Activated CD4-positive, alpha-beta T cell treated with anti-CD3 and anti-CD28 coated beads, Interleukin-2, amount 10 ng/mL, durations not matched to agents 24 days and 14 days (primary cell): ENCODE measurements at regions of chr2 and their contacts with region 1.

Region 1: DNA sequence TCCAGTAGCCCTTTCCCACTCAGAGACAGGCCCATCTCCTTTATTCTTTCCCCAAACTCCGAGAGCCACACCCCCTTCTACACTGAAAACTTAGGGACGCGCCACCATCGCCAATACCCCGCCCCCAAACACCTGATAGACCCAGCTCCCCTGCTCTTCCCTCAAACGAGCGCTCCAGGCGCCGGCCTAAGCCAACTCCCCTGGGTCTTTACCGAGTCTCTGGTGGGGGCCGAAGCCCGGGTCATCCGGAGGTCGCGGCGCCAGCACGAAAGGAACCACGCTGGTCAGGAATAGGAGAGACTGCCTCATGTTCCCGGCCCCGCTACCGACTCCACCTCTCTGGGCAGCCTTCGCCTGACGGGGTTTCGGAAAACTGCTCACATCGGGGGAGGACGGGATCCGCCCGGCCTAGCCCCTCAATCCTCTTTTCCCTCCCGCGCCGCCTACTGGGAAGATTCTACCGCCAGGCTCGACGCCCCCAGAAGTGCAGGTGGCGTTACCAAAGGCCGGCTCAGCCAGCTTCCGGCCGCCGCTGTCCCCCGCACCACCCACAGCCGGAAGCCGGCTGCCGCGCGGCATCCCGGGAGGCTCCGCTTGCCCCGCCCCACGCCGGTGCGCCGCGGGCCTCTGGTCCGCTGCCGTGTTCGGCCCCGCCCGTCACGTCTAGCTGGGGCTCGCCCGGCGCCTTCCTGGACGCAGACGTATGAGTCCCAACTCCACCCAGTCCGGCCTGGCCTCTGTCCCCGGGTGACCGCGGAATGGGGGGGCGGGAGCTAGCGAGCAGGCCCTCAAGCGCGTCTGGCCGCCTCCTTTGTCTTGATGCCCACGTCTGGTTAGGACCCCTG is at the start of gene ADAM17:
- DNase-seq: peak; percentile 97
- H3K4me3 Mint-ChIP-seq: peak within 1 kb of the TSS; percentile 96
- H3K27ac Mint-ChIP-seq: peak within 1 kb of the TSS; percentile 93
- H3K4me1 Mint-ChIP-seq: peaks cover 48% of the 10 kb centered on the region
- H3K27me3 Mint-ChIP-seq: no peaks in the 10 kb centered on the region
- total RNA-seq, gene ADAM17: 25.6 and 26.5 TPM in 2 replicates

Region 2: DNA sequence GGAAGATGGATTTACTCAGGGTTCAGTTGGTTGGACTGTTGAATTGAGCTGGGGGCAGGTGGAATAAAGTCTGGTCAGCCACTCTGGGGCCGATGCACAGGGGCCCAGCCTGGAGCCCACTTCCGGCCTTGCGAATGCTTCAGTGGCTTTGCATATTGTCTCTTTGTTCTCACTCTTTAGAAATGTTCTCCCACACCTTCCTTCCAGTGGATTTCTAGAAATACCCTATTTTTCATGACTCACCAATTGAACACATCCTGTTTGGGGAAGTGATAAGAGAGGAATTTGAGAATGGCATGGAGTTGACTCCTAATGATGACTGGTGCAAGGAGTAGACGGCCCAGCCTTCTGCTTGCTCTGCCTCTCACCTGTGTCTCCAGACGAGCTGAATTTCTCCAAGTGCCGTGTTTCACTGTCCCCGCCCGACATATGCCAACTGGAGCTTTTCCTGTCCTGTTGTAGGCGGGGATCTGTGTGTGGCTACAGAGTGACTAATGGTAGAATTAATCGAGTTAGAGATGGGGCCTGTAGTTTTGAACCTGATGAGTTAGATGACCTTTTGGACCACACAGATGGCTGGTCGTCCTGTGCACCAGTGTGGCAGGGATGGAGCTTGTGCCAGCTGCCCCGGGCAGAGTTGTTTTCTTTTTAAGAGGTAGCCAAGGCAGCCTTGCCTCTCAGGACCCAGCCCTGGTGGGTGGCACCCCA is 320.7 kb before region 1 on chr2:
- intact Hi-C with region 1: no loop called
- DNase-seq: no peak
- H3K4me3 Mint-ChIP-seq: no peak overlapping the region
- H3K27ac Mint-ChIP-seq: no peak overlapping the region
- H3K4me1 Mint-ChIP-seq: peaks cover 7% of the 10 kb centered on the region
- H3K27me3 Mint-ChIP-seq: peaks cover 5% of the 10 kb centered on the region

Region 3: GRCh38 chr2:9494096-9494495 is 61.4 kb before region 1 on chr2:
- intact Hi-C with region 1: loop called (anchors 5 kb)
- DNase-seq: no peak
- H3K4me3 Mint-ChIP-seq: no peak overlapping the region
- H3K27ac Mint-ChIP-seq: peak overlapping the region; percentile 18
- H3K4me1 Mint-ChIP-seq: peaks cover 21% of the 10 kb centered on the region
- H3K27me3 Mint-ChIP-seq: no peaks in the 10 kb centered on the region

Region 4: DNA sequence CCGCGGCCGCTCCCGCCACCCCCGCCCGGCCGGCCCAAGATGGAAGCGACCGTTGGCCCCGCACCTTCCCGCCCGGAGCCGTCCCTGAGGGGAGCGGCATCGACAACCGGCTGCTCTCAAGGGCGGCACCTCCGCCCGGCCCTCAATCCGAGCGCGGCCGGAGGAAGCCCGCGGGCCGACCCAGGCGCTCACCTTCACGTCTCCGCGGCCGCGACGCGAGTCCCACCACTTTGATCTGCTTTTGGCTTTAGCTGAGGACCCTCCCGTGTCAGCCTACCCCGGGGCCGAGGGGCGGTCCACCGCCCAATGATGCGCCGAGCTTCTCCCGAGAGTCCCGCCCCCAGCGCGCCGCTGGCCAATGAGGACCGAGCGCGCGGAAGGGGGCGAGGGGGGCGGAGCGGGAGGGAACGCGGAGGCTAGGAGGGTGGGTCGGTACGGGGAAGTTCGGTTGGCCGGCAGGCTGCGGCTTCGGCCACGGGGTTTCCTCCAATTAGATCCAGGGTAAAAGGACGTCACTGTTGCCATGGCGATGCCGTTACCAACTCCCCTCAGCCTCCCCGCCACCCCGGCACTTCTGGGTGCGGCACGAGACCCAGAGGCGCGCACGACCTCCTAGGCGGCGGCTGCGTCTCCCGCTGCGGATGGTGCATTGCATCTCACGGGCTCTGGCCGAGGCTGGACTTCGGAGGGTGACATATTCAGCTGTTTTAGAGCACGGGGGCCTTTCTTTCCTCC is 75.4 kb after region 1 on chr2 and contains the start of gene YWHAQ:
- intact Hi-C with region 1: loop called (anchors 1 kb)
- DNase-seq: peak; percentile 99
- H3K4me3 Mint-ChIP-seq: peak within 1 kb of the TSS; percentile 96
- H3K27ac Mint-ChIP-seq: peak within 1 kb of the TSS; percentile 96
- H3K4me1 Mint-ChIP-seq: peaks cover 42% of the 10 kb centered on the region
- H3K27me3 Mint-ChIP-seq: peaks cover 13% of the 10 kb centered on the region
- total RNA-seq, gene YWHAQ: 321 and 335 TPM in 2 replicates

Region 5: DNA sequence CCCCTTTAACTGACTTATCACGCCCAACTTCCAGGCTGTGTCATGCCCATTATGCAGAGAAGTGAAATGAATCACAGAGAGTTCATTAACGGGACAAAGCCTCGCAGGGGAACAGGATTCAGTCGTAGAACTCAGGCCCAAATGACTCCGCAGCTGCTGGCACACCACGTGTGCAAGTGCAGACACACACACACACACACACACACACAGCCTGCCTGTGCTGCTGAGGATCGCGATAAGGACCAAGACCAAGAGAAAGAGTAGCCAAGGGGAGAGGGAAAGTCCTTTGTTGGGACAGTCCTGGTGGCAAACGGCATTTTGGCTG is 197.7 kb after region 1 on chr2:
- intact Hi-C with region 1: loop called (anchors 1 kb)
- DNase-seq: peak; percentile 83
- H3K4me3 Mint-ChIP-seq: peak overlapping the region; percentile 56
- H3K27ac Mint-ChIP-seq: peak overlapping the region; percentile 88
- H3K4me1 Mint-ChIP-seq: peaks cover 59% of the 10 kb centered on the region
- H3K27me3 Mint-ChIP-seq: peaks cover 32% of the 10 kb centered on the region

Region 6: DNA sequence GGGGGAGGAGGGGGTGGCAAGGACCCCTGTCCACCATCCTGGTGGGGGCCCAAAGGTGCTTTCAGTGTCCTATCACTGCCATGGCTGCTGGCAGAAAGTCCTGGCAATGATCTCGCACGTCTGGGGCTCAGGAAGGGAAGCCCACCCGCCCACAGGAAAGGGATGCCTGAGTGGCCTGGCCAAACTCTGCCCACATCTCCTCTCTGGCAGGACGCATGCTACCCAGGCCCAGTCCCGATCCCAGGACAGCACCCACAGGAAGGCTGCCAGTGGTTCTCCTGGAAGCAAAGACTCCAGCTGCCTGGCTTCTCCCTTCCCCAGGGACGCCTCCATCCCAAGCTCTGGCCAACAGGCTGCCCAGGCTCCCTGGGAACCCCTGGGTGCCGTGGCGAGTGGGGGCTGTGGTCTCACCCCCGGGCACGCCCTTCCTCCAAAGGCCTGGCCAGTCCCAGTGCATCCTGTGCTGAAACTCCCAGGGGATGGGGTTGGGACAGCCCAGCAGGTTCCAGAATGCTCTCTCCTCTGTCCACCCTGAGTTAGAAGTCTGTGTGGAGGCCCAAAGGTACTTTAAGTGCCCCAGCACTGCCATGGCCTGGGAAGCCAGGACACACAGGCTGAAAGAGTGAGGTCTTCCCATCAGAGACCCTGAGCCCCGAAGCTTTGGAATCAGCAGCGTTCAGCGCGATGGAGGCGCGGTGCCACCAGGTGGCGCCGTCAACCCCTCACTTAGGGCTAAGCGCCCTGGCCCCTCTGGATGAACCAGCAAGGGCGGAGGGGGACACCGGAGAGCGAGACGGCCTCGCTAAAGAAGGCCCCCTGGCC is 258.0 kb after region 1 on chr2:
- intact Hi-C with region 1: no loop called
- DNase-seq: peak; percentile 93
- H3K4me3 Mint-ChIP-seq: no peak overlapping the region
- H3K27ac Mint-ChIP-seq: peak overlapping the region; percentile 68
- H3K4me1 Mint-ChIP-seq: peaks cover 11% of the 10 kb centered on the region
- H3K27me3 Mint-ChIP-seq: peaks cover 15% of the 10 kb centered on the region

Region 7: GRCh38 chr2:10079870-10080535 is 524.5 kb after region 1 on chr2 and contains the start of gene CYS1:
- intact Hi-C with region 1: loop called (anchors 5 kb)
- DNase-seq: peak; percentile 78
- H3K4me3 Mint-ChIP-seq: peak within 1 kb of the TSS; percentile 81
- H3K27ac Mint-ChIP-seq: peak within 1 kb of the TSS; percentile 75
- H3K4me1 Mint-ChIP-seq: peaks cover 30% of the 10 kb centered on the region
- H3K27me3 Mint-ChIP-seq: peaks cover 73% of the 10 kb centered on the region
- total RNA-seq, gene CYS1: 0.24 and 0.63 TPM in 2 replicates

Region 8: DNA sequence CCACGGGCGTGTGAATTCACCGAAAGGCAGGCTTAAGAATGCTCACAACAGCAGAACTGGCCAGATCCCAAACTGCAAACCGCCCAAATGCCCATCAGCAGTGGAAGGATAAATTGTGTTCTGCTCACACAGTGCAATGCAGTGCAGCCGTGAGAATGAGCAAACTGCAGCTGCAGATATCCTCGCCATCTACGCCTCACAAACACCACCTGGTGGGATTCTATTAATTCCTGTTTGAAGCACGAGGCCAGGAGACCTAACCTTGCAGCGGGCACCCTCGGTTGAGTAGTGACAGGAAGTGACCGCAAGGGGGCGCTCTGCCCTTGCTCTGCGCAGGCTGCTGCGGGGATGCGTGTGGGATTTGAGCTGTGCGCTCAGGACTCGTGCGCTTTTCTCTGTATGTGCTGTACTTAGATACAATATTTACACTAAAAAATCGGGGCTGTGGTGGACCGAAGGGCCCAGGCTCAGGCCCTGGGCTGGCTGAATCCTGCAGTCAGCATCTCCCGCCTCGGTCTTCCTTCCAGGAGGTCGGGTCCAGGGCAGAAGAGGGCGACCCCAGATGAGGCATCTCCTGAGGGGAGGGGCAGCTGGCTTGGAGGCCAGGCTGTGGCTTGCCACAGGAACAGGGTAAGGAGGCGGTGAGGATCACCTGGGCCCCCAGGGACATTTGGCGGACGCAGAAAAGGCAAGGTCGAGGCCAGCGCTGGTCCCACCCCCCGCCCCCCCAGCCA is 1276.9 kb after region 1 on chr2:
- intact Hi-C with region 1: no loop called
- DNase-seq: peak; percentile 95
- H3K4me3 Mint-ChIP-seq: no peak overlapping the region
- H3K27ac Mint-ChIP-seq: no peak overlapping the region
- H3K4me1 Mint-ChIP-seq: peaks cover 2% of the 10 kb centered on the region
- H3K27me3 Mint-ChIP-seq: peaks cover 29% of the 10 kb centered on the region